ENCODE measurements at regions of chr5 and their contacts with region 1.

Region 1: DNA sequence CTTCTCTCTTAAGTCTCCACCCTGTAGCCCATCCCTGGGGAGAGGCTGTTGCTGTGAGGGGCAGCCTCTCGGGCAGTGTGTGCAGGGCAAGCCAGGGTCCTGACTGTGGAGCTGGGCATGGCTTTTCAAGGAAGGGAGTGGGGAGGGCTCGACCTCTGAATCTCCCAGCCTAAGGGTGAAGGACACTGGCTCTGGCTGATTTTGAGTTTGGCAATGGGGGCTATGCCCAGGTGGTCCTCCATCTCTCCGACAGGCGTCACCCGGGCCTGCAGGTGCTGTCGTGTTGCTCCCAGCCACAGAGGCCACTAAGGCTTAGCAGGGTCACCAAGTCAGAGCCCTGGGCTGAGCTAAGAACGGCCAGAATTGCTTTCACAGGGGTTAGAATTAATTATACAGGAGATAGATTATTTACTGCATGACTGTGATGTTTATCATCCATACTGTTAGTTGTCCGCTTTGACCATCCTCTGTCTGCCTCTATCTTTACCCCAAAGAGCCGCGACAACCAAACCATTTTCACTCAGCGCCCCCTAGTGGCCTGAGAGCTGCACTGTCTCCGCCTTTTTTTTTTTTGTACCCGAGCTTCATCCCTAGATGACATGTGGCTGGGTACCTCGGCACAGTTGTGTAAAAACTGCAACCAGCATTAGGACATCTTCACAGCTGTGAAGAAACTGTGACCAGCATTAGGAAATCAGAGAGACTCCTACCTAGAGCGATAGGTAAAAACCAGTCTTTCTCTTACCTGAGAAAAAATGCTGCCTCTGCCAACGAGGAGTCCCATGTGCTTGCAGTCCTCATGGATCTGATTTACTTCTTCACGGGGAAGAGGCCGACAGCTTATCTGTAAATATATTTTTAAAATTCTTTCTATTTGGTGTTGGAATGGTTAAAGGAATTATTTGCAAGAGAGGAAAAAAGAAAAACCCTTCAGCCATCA is 44.5 kb downstream of the AGXT2 start:
- DNase-seq: peak; percentile 76
- CTCF ChIP-seq: peak; percentile 91

Region 2: GRCh38 chr5:34957857-34958690 is 45.2 kb before region 1 on chr5:
- in situ Hi-C with region 1: loop called (anchors 10 kb)
- DNase-seq: peak; percentile 54
- CTCF ChIP-seq: peak; percentile 61

Region 3: DNA sequence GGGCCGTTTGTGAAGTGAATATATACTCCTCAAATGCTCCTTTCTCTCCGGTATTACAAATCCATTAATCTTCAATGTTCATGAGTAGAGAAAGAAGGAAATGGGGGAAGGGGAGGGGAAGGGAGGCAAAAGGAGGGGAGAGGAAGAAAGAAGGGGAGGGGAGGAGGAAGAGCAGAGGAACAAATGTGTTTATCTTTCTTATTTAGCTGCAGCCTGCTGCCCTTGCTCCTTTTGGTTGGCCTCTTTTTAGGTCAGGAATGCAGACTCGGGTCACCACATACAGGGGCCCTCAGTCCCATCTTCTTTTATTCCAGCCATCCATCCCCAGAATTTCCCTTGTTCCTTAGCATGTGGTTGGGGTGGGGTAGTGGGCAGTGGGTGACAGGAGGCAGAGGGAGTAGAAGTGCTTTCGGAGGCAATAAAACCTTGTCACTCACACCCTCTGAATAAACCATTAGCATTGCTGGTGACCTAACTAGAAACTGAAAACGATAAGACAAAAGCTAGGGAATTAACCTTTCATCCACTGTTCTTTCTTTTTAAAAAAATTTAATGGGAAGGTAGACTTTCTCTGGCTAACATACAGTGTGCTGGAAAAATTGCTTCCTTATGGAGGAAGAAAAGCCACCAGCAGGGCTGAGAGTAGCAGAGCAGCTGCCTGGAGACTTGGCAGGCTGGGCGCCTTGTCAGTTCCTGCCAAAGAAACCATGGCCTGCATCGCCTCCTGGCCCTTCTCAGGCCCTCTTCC is 243.8 kb after region 1 on chr5:
- in situ Hi-C with region 1: no loop called
- DNase-seq: no peak
- CTCF ChIP-seq: no peak

Region 4: GRCh38 chr5:35383041-35383440 is 379.8 kb after region 1 on chr5:
- in situ Hi-C with region 1: no loop called
- DNase-seq: no peak
- CTCF ChIP-seq: no peak

Region 5: DNA sequence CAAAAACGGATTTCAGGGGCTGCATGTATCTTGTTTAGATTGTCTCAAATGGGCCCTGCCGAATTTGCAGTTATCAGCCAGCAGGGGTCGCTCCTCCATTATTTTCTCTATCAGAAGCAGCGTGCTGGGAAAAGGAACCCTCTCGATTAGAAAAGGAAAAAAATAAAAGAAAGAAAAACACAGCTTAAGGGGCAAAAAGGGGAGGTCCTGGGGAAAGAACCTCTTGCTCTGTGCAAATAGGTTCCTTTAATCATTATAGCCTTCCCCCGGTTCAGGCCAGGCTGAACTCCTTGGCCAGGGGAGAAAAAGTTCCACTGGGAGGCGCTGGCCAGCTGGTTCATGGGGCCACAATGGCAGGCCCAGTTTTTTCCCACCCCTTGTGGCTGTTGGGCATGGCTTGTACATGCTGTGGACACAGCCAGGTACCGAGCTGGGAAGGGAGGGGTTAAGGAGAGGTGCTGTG is 960.1 kb after region 1 on chr5:
- in situ Hi-C with region 1: no loop called
- DNase-seq: no peak
- CTCF ChIP-seq: peak; percentile 35

Measured in GM13977 (cell line).